Sigmoid colon (tissue), 7 donors: ENCODE measurements at regions of chr12 and their contacts with region 1.

Region 1: DNA sequence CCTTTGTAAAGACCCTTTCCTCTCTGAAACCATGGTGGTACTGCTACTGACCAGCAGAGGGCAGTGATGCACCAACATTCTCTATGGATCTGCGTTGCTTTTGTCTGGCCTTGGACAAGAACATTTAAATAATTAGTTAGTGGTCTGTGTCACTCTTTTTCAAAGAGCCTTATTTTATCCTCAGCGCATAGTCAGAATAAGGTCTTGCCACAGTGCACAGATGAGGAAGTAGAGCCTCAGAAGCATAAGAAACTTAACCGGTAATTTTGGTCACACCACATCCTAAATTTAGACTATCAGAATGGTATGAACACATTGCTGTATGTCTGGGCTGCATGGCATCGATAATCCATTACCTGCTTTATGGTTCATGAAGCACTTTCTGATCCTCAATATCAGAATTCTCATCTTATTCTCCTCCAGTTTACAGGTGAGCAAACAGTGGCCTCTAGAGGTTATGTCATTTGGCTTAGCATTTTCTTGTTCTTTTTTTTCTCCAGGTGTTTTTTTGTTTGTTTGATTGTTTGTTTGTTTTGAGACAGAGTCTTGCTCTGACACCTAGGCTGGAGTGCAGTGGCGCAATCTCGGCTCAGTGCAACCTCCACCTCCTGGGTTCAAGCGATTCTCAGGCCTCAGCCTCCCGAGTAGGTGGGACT is 23.7 kb upstream of the IFT81 start:
- DNase-seq: peak; percentile 80
- H3K4me3 ChIP-seq: no peak overlapping the region
- H3K27ac ChIP-seq: peak overlapping the region; percentile 21 to 67 (median 59)
- H3K4me1 ChIP-seq: peaks cover 0 to 19% (median 10%) of the 10 kb centered on the region in 4 donors
- H3K27me3 ChIP-seq: no peaks in the 10 kb centered on the region
- CTCF ChIP-seq: peak; percentile 79 to 96 (median 93)
- EP300 ChIP-seq: no peak
- POLR2A ChIP-seq: no peak

Region 2: GRCh38 chr12:110124184-110124995 is 23.9 kb after region 1 on chr12 and contains the start of gene IFT81:
- intact Hi-C with region 1: loop called (anchors 1 kb)
- DNase-seq: peak; percentile 98
- H3K4me3 ChIP-seq: peak within 1 kb of the TSS; percentile 83 to 97 (median 92)
- H3K27ac ChIP-seq: peak within 1 kb of the TSS; percentile 91 to 97 (median 93)
- H3K4me1 ChIP-seq: peaks cover 0 to 37% (median 16%) of the 10 kb centered on the region in 4 donors
- H3K27me3 ChIP-seq: no peaks in the 10 kb centered on the region
- CTCF ChIP-seq: no peak
- EP300 ChIP-seq: no peak
- POLR2A ChIP-seq: peak; percentile 53 to 56
- total RNA-seq, gene IFT81: 20.4 to 42.7 (median 37.0) TPM

Region 3: GRCh38 chr12:110224379-110225304 is 124.2 kb after region 1 on chr12:
- intact Hi-C with region 1: loop called (anchors 2 kb)
- DNase-seq: peak; percentile 77
- H3K4me3 ChIP-seq: peak overlapping the region in 3 of 4 donors; percentile 4 to 28 (median 15)
- H3K27ac ChIP-seq: peak overlapping the region; percentile 64 to 80 (median 68)
- H3K4me1 ChIP-seq: peaks cover 0 to 34% (median 24%) of the 10 kb centered on the region in 4 donors
- H3K27me3 ChIP-seq: no peaks in the 10 kb centered on the region
- CTCF ChIP-seq: peak; percentile 37 to 60 (median 48)
- EP300 ChIP-seq: no peak
- POLR2A ChIP-seq: no peak

Region 4: DNA sequence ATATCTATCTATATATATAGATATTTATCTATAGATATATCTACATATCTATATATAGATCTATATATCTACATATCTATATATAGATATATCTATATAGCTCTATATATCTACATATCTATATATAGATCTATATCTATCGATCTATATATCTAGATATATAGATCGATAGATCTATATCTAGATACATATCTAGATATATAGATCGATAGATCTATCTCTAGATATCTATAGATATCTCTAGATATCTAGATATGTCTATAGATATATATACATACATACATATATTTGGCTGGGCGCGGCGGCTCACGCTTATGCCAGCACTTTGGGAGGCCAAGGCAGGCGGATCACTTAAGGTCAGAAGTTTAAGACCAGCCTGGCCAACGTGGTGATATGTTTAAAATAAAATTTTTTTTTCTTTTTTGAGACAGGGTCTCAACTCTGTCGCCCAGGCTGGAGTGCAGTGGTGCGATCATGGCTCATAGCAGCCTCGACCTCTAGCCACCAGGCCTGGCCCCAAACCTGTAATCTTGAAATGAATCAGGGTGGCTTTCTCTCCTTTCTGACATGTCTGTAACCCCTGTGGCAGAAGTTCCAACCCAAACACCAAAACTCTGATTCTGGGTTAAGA is 331.6 kb after region 1 on chr12:
- intact Hi-C with region 1: loop called (anchors 1 kb)
- DNase-seq: peak; percentile 41
- H3K4me3 ChIP-seq: peak overlapping the region; percentile 36 to 55 (median 48)
- H3K27ac ChIP-seq: peak overlapping the region in 3 of 4 donors; percentile 60 to 71 (median 66)
- H3K4me1 ChIP-seq: peaks cover 0 to 4% (median 0%) of the 10 kb centered on the region in 4 donors
- H3K27me3 ChIP-seq: no peaks in the 10 kb centered on the region
- CTCF ChIP-seq: no peak
- EP300 ChIP-seq: no peak
- POLR2A ChIP-seq: no peak